Activated CD4-positive, alpha-beta memory T cell treated with anti-CD3 and anti-CD28 coated beads, Interleukin-2, amount 10 ng/mL, durations not matched to agents 7 days and 5 days (primary cell): ENCODE measurements at regions of chr10 and their contacts with region 1.

Region 1: DNA sequence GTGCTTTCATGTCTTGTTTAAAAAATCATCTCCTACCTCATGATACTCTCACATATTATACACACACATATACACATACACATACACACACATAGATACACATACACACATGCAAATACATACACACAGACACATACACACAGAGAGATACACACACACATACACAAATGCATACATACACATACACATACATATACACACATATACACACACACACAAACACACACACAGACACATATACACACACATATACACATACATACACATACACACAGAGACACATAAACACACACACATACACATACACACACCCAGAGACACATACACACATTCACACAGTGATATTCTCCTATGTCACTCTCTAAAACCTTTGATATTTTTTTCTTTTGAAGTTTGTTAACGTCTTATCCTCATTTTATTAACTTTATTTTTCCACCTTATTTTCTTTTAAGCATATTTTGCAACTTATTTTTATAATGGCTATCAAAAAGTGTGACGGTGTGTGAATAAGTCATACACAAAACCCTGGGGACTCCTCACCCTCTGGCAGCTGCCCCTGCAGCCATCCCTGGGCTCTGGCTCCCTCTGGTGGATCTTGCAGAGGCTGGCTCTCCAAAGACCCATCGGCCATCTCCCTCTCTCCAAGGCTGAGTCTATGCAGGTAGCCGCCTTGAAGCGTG is 3.9 kb upstream of the C10orf120 start:
- DNase-seq: peak; percentile 55
- H3K4me3 Mint-ChIP-seq: no peak overlapping the region
- H3K27ac Mint-ChIP-seq: no peak overlapping the region
- H3K4me1 Mint-ChIP-seq: peaks cover 11% of the 10 kb centered on the region
- H3K27me3 Mint-ChIP-seq: peaks cover 3% of the 10 kb centered on the region

Region 2: GRCh38 chr10:122648599-122649428 is 54.8 kb before region 1 on chr10:
- CTCF ChIA-PET with region 1: interaction called, 15 read pairs
- POLR2A ChIA-PET with region 1: no interaction called
- DNase-seq: peak; percentile 41
- H3K4me3 Mint-ChIP-seq: no peak overlapping the region
- H3K27ac Mint-ChIP-seq: no peak overlapping the region
- H3K4me1 Mint-ChIP-seq: no peaks in the 10 kb centered on the region
- H3K27me3 Mint-ChIP-seq: peaks cover 18% of the 10 kb centered on the region

Region 3: GRCh38 chr10:122746408-122746807 is 42.8 kb after region 1 on chr10:
- CTCF ChIA-PET with region 1: no interaction called
- POLR2A ChIA-PET with region 1: no interaction called
- DNase-seq: no peak
- H3K4me3 Mint-ChIP-seq: no peak overlapping the region
- H3K27ac Mint-ChIP-seq: no peak overlapping the region
- H3K4me1 Mint-ChIP-seq: no peaks in the 10 kb centered on the region
- H3K27me3 Mint-ChIP-seq: peaks cover 8% of the 10 kb centered on the region